ENCODE measurements at regions of chr17 and their contacts with region 1.

Region 1: DNA sequence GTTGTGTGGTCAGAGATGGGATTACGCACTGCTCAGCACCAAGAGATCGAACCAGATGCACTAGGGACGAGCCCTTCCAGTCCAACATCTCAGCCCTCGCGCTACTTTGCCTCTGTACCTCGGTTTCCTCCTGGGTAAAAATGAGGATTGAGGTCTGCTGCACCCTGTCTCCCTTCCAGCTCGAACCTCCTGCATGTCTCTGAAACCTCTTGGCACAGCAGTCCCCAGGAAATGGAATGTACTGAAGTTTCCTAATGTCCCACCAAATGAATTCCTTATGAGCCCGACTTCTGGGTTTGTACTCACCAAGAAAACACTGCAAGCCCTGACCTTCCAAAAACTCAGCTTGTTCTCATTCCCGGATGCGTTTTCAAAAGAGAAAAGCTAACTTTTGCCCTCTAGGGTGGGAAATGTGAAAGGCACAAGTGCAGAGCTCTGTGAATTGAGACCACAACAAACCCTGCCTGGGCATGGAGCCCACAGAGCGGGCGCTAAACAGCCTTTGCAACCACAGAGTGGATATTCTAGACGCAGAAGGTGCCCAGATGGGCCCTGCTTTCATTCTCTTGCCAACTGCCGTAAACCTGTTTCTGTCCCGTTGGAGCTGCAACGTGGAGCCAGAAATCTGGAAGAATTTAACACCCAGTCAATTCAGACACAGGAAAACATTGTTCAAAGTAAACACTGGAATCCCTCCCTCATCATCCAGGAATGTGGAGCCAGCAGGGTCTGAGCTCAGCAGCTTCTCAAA is 10.3 kb downstream of the CDRT4 start:
- DNase-seq: peak; percentile 61 to 70
- ATAC-seq: peak; percentile 48 to 78 (median 74)
- H3K4me3 ChIP-seq: peak overlapping the region in 2 of 10 donors; percentile 6 to 14
- H3K27ac ChIP-seq: peak overlapping the region; percentile 23 to 80 (median 71)
- H3K4me1 ChIP-seq: peaks cover 4 to 33% (median 22%) of the 10 kb centered on the region in 9 donors
- H3K27me3 ChIP-seq: no peaks in the 10 kb centered on the region
- CTCF ChIP-seq: peak in 8 of 9 donors; percentile 14 to 54 (median 38)

Region 2: GRCh38 chr17:15257258-15257788 is 199.8 kb before region 1 on chr17:
- intact Hi-C with region 1: loop called in 4 of 10 experiments (anchors 2 to 5 kb)
- DNase-seq: peak; percentile 84 to 87
- ATAC-seq: peak; percentile 12 to 60 (median 46)
- H3K4me3 ChIP-seq: peak overlapping the region in 9 of 10 donors; percentile 3 to 44 (median 31)
- H3K27ac ChIP-seq: peak overlapping the region in 8 of 10 donors; percentile 52 to 99 (median 59)
- H3K4me1 ChIP-seq: peaks cover 15 to 87% (median 78%) of the 10 kb centered on the region in 9 donors
- H3K27me3 ChIP-seq: peaks cover 0 to 15% (median 0%) of the 10 kb centered on the region in 7 donors
- CTCF ChIP-seq: peak; percentile 70 to 97 (median 93)

Region 3: GRCh38 chr17:15262291-15263205 is 194.6 kb before region 1 on chr17:
- intact Hi-C with region 1: loop called in 4 of 10 experiments (anchors 2 to 5 kb)
- DNase-seq: peak; percentile 89 to 90
- ATAC-seq: peak; percentile 82 to 92 (median 89)
- H3K4me3 ChIP-seq: peak overlapping the region; percentile 49 to 89 (median 80)
- H3K27ac ChIP-seq: peak overlapping the region; percentile 92 to 100 (median 98)
- H3K4me1 ChIP-seq: peaks cover 7 to 50% (median 41%) of the 10 kb centered on the region in 9 donors
- H3K27me3 ChIP-seq: peaks cover 0 to 45% (median 0%) of the 10 kb centered on the region in 7 donors
- CTCF ChIP-seq: peak in 6 of 9 donors; percentile 17 to 60 (median 36)

Region 4: GRCh38 chr17:15307710-15308111 is 149.4 kb before region 1 on chr17:
- intact Hi-C with region 1: no loop called
- DNase-seq: no peak
- ATAC-seq: no peak
- H3K4me3 ChIP-seq: no peak overlapping the region
- H3K27ac ChIP-seq: no peak overlapping the region
- H3K4me1 ChIP-seq: peaks cover 0 to 8% (median 0%) of the 10 kb centered on the region in 9 donors
- H3K27me3 ChIP-seq: no peaks in the 10 kb centered on the region
- CTCF ChIP-seq: no peak

Region 5: GRCh38 chr17:15341385-15341849 is 115.7 kb before region 1 on chr17 and contains the start of gene TEKT3:
- intact Hi-C with region 1: loop called in 1 of 10 experiments (anchors 10 kb)
- DNase-seq: peak; percentile 84 to 88
- ATAC-seq: peak; percentile 100
- H3K4me3 ChIP-seq: peak within 1 kb of the TSS; percentile 29 to 68 (median 58)
- H3K27ac ChIP-seq: no peak within 1 kb of the TSS
- H3K4me1 ChIP-seq: peaks cover 0 to 13% (median 10%) of the 10 kb centered on the region in 9 donors
- H3K27me3 ChIP-seq: peaks cover 0 to 58% (median 11%) of the 10 kb centered on the region in 7 donors
- CTCF ChIP-seq: no peak
- total RNA-seq, gene TEKT3: 0.26 to 1.1 (median 0.68) TPM in 7 of 10 donors, not detected in the others

Region 6: GRCh38 chr17:15409721-15410250 is 47.4 kb before region 1 on chr17:
- intact Hi-C with region 1: loop called in 2 of 10 experiments (anchors 5 kb)
- DNase-seq: peak in 1 of 2 donors; percentile 37
- ATAC-seq: peak; percentile 59 to 76 (median 70)
- H3K4me3 ChIP-seq: peak overlapping the region in 4 of 10 donors; percentile 13 to 16 (median 14)
- H3K27ac ChIP-seq: peak overlapping the region; percentile 48 to 81 (median 74)
- H3K4me1 ChIP-seq: peaks cover 3 to 47% (median 20%) of the 10 kb centered on the region in 9 donors
- H3K27me3 ChIP-seq: no peaks in the 10 kb centered on the region
- CTCF ChIP-seq: no peak

Region 7: DNA sequence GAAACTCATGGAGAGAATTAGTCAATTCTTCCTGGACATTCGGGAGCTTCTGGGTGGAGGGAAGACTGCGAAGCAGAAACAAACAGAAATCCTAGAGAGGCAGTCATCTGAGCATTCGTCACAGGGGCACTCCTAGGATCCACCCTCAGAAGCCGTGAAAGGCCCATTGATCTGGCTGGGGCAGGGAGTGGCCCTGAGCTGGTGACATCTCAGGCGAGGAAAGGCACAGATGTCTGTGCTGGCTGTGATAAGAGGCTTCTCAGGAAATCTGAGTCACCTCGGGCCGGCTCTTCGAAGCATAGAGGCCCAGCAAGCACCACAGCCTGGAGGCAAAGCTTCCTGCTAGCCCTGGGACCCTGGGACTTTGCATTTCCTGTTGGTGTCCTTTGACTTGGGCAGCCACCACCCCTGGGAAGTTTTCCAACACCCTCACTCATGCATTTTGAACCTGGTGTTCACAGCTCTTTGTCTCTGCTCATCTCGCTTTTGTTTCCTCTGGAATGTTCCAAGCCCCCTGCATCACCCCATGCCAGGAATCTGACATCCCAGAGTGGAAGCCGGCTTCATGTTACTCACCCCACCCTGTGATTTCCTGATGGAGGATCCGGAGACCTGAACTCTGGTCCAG is 33.6 kb after region 1 on chr17:
- intact Hi-C with region 1: loop called in 1 of 10 experiments (anchors 5 kb)
- DNase-seq: peak; percentile 63 to 71
- ATAC-seq: peak; percentile 65 to 97 (median 92)
- H3K4me3 ChIP-seq: no peak overlapping the region
- H3K27ac ChIP-seq: peak overlapping the region; percentile 58 to 81 (median 70)
- H3K4me1 ChIP-seq: peaks cover 4 to 18% (median 10%) of the 10 kb centered on the region in 9 donors
- H3K27me3 ChIP-seq: no peaks in the 10 kb centered on the region
- CTCF ChIP-seq: no peak

Region 8: GRCh38 chr17:15502369-15503112 is 45.4 kb after region 1 on chr17:
- intact Hi-C with region 1: loop called in 2 of 10 experiments (anchors 5 kb)
- DNase-seq: peak; percentile 92 to 93
- ATAC-seq: peak; percentile 88 to 96 (median 94)
- H3K4me3 ChIP-seq: peak overlapping the region in 9 of 10 donors; percentile 8 to 47 (median 40)
- H3K27ac ChIP-seq: peak overlapping the region; percentile 36 to 88 (median 80)
- H3K4me1 ChIP-seq: peaks cover 3 to 23% (median 14%) of the 10 kb centered on the region in 9 donors
- H3K27me3 ChIP-seq: no peaks in the 10 kb centered on the region
- CTCF ChIP-seq: peak; percentile 84 to 97 (median 91)